Caco-2 (cell line): ENCODE measurements at regions of chr6 and their contacts with region 1.

Region 1: DNA sequence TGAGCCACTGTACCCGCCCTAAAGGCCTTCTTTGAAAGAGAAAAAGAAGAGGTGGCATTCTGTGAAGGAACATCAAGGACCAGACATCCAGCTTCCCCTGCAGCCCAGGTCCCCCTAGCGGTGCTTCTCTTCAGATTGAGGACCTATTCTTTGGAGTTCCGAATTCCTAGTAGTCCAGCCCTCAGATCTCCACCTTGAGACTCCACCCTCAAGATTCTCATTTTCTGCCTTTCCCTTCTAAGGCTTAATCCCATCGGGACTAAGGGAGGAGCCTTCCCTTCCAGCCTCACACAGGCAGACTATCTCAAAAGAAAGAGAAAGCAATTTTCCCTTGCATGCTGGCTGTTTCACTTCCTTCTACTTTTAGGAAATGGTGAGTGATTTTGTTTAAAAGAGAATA is 32.5 kb downstream of the MUC22 start:
- DNase-seq: peak; percentile 57 to 66
- H3K4me3 ChIP-seq: no peak overlapping the region
- H3K4me3 Mint-ChIP-seq: no peak overlapping the region
- H3K27ac Mint-ChIP-seq: no peak overlapping the region
- H3K4me1 ChIP-seq: peaks cover 6% of the 10 kb centered on the region; the same call in 1 of the 2 replicates
- H3K4me1 Mint-ChIP-seq: no peaks in the 10 kb centered on the region
- H3K27me3 ChIP-seq: no peaks in the 10 kb centered on the region
- H3K27me3 Mint-ChIP-seq: no peaks in the 10 kb centered on the region
- CTCF ChIP-seq: peak; percentile 52 to 68

Region 2: GRCh38 chr6:30775104-30775503 is 267.7 kb before region 1 on chr6:
- CTCF ChIA-PET with region 1: no interaction called
- POLR2A ChIA-PET with region 1: no interaction called
- intact Hi-C with region 1: no loop called
- DNase-seq: no peak
- H3K4me3 ChIP-seq: no peak overlapping the region
- H3K4me3 Mint-ChIP-seq: no peak overlapping the region
- H3K27ac Mint-ChIP-seq: no peak overlapping the region
- H3K4me1 ChIP-seq: peaks cover 19% of the 10 kb centered on the region
- H3K4me1 Mint-ChIP-seq: peaks cover 16% of the 10 kb centered on the region
- H3K27me3 ChIP-seq: no peaks in the 10 kb centered on the region
- H3K27me3 Mint-ChIP-seq: no peaks in the 10 kb centered on the region
- CTCF ChIP-seq: no peak

Region 3: GRCh38 chr6:30828027-30828960 is 214.5 kb before region 1 on chr6:
- CTCF ChIA-PET with region 1: no interaction called
- POLR2A ChIA-PET with region 1: no interaction called
- intact Hi-C with region 1: no loop called
- DNase-seq: peak; percentile 83 to 91
- H3K4me3 ChIP-seq: no peak overlapping the region
- H3K4me3 Mint-ChIP-seq: no peak overlapping the region
- H3K27ac Mint-ChIP-seq: peak overlapping the region; percentile 43
- H3K4me1 ChIP-seq: peaks cover 16% of the 10 kb centered on the region
- H3K4me1 Mint-ChIP-seq: peaks cover 27% of the 10 kb centered on the region
- H3K27me3 ChIP-seq: no peaks in the 10 kb centered on the region
- H3K27me3 Mint-ChIP-seq: no peaks in the 10 kb centered on the region
- CTCF ChIP-seq: peak; percentile 85 to 89

Region 4: GRCh38 chr6:30931969-30932645 is 110.7 kb before region 1 on chr6 and contains the start of gene SFTA2:
- CTCF ChIA-PET with region 1: interaction called, 4 read pairs
- POLR2A ChIA-PET with region 1: no interaction called
- intact Hi-C with region 1: loop called (anchors 5 kb)
- DNase-seq: peak; percentile 56 to 65
- H3K4me3 ChIP-seq: no peak within 1 kb of the TSS
- H3K4me3 Mint-ChIP-seq: peak within 1 kb of the TSS; percentile 60
- H3K27ac Mint-ChIP-seq: peak within 1 kb of the TSS; percentile 91
- H3K4me1 ChIP-seq: peaks cover 21% of the 10 kb centered on the region
- H3K4me1 Mint-ChIP-seq: peaks cover 36% of the 10 kb centered on the region
- H3K27me3 ChIP-seq: no peaks in the 10 kb centered on the region
- H3K27me3 Mint-ChIP-seq: no peaks in the 10 kb centered on the region
- CTCF ChIP-seq: no peak
- total RNA-seq, gene SFTA2: 6.6 and 9.6 TPM in 2 replicates

Region 5: GRCh38 chr6:30942338-30943060 is 100.3 kb before region 1 on chr6:
- CTCF ChIA-PET with region 1: interaction called, 12 read pairs
- POLR2A ChIA-PET with region 1: no interaction called
- intact Hi-C with region 1: no loop called
- DNase-seq: peak; percentile 91 to 94
- H3K4me3 ChIP-seq: no peak overlapping the region
- H3K4me3 Mint-ChIP-seq: peak overlapping the region; percentile 55
- H3K27ac Mint-ChIP-seq: peak overlapping the region; percentile 80
- H3K4me1 ChIP-seq: peaks cover 23% of the 10 kb centered on the region
- H3K4me1 Mint-ChIP-seq: peaks cover 23% of the 10 kb centered on the region
- H3K27me3 ChIP-seq: no peaks in the 10 kb centered on the region
- H3K27me3 Mint-ChIP-seq: no peaks in the 10 kb centered on the region
- CTCF ChIP-seq: peak; percentile 52 to 67

Region 6: DNA sequence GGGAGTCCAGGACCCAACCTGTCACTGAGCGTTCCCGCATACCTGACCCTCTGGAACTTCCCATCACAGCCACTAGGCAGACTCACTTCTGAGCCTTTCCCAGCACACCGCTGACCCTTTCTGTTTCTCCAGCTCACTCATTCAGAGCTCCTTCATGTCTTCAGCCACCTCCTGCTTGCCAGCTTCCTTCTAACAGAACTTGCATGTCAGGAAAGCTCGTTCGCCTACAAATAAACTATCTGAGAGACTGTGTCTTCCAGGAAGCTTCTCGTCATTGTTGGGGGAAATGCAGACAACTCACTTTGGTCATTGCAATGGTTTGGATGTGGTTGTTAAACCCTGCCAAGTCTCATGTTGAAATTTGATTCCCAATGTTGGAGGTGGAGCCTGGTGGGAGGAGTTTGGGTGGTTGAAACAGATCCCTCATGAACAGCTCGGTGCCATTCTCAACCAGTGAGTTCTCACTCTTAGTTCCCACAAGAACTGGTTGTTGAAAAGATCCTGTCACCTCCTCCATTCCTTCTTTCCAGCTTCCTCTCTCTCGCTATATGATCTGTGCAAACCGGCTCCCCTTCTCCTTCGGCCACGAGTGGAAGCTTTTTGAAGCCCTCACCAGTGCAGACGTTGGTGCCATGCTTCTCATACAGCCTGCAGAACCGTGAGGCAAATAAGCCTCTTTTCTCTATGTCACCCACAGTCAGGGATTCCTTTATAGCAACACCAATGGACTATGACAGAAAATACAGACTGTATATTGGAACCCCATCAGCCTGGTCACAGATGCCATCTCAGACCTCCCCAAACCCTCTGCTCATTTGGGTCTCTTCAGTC is 60.6 kb before region 1 on chr6:
- CTCF ChIA-PET with region 1: interaction called, 10 read pairs
- POLR2A ChIA-PET with region 1: no interaction called
- intact Hi-C with region 1: no loop called
- DNase-seq: peak; percentile 55 to 62
- H3K4me3 ChIP-seq: no peak overlapping the region; the same call in 1 of the 2 replicates
- H3K4me3 Mint-ChIP-seq: peak overlapping the region; percentile 59
- H3K27ac Mint-ChIP-seq: no peak overlapping the region
- H3K4me1 ChIP-seq: peaks cover 6% of the 10 kb centered on the region; the same call in 1 of the 2 replicates
- H3K4me1 Mint-ChIP-seq: peaks cover 7% of the 10 kb centered on the region
- H3K27me3 ChIP-seq: no peaks in the 10 kb centered on the region
- H3K27me3 Mint-ChIP-seq: peaks cover 4% of the 10 kb centered on the region
- CTCF ChIP-seq: peak; percentile 39 to 48

Region 7: GRCh38 chr6:31031095-31031494 is 11.7 kb before region 1 on chr6:
- CTCF ChIA-PET with region 1: no interaction called
- POLR2A ChIA-PET with region 1: no interaction called
- intact Hi-C with region 1: no loop called
- DNase-seq: no peak
- H3K4me3 ChIP-seq: no peak overlapping the region
- H3K4me3 Mint-ChIP-seq: no peak overlapping the region
- H3K27ac Mint-ChIP-seq: no peak overlapping the region
- H3K4me1 ChIP-seq: no peaks in the 10 kb centered on the region
- H3K4me1 Mint-ChIP-seq: no peaks in the 10 kb centered on the region
- H3K27me3 ChIP-seq: no peaks in the 10 kb centered on the region
- H3K27me3 Mint-ChIP-seq: no peaks in the 10 kb centered on the region
- CTCF ChIP-seq: no peak